Endothelial cell of umbilical vein (primary cell): ENCODE measurements at regions of chr9 and their contacts with region 1.

Region 1: DNA sequence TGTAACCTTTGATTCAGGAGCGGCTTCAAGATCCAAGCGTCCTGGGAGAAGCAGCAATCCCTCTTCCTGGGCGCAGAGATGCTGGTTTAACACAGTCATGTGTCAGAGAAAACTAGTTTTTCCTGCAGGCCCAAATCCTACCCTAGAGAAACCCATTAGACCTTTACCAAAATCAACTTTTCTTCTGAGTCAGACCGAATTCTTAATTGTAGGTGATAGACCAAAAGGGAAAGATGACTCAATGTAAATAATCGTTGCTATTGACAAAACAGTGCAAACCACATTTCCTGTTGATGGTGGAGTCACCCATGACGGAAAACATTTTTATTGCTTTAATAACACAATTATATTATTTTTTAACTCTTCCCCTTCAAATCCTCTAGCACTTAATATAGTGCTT is 40.1 kb downstream of the SLC1A1 start:
- DNase-seq: peak; percentile 80
- H3K4me3 ChIP-seq: peak overlapping the region in 1 of 3 experiments; percentile 28
- H3K27ac ChIP-seq: peak overlapping the region; percentile 96
- H3K4me1 ChIP-seq: peaks cover 26% of the 10 kb centered on the region
- H3K27me3 ChIP-seq: no peaks in the 10 kb centered on the region
- CTCF ChIP-seq: no peak
- POLR2A ChIP-seq: peak; percentile 19

Region 2: GRCh38 chr9:4099976-4100735 is 430.2 kb before region 1 on chr9:
- CTCF ChIA-PET with region 1: no interaction called
- POLR2A ChIA-PET with region 1: no interaction called
- dilution Hi-C with region 1: no loop called
- intact Hi-C with region 1: no loop called
- DNase-seq: no peak
- H3K4me3 ChIP-seq: no peak overlapping the region
- H3K27ac ChIP-seq: no peak overlapping the region
- H3K4me1 ChIP-seq: no peaks in the 10 kb centered on the region
- H3K27me3 ChIP-seq: no peaks in the 10 kb centered on the region
- CTCF ChIP-seq: no peak
- POLR2A ChIP-seq: no peak

Region 3: GRCh38 chr9:4541856-4542255 is 11.5 kb after region 1 on chr9:
- CTCF ChIA-PET with region 1: no interaction called
- POLR2A ChIA-PET with region 1: no interaction called
- dilution Hi-C with region 1: no loop called
- intact Hi-C with region 1: loop called (anchors 1 kb)
- DNase-seq: peak; percentile 18
- H3K4me3 ChIP-seq: no peak overlapping the region
- H3K27ac ChIP-seq: peak overlapping the region; percentile 62
- H3K4me1 ChIP-seq: peaks cover 27% of the 10 kb centered on the region
- H3K27me3 ChIP-seq: no peaks in the 10 kb centered on the region
- CTCF ChIP-seq: no peak
- POLR2A ChIP-seq: no peak

Region 4: DNA sequence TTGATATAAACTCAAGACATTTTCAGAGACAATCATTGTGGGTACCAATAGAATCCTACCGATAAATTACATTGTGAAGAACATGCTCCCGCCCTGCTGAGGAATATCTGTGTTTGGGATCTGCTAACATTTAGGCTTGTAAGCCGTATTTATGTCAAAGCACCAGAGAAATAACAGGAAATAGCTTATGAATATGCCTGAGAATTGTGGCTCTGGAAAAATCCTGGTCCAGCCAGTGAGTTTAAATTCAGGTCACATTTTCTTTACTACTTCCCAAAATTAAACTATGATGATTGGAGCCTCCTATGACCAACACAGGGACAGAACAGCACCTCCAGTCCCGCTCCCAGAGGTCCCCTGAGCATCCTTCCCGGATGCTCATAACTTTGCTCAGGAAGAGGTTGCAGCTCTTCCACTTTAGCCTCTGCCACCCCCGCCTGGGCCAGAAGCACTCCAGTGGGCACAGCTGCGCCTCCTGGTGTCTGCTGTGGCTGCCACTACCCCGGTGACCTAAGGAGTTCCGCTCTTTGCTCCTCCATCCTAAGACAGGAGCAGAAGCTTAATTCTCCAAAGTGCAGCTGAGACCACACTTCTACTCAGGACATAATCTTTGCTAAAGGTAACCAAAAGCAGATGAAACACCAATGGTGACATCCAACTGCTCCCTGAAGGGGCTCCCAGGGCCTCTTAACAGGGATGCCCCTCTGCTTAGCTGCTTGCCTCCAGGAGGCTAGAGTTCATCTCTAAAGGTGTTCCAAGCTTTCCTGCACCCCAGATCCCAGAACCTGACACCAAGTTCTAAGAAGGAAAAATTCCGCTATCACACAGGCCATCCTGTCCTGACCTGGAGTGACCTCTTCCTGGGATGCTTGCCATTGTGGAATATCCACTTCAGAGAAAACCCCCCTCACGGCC is 18.7 kb after region 1 on chr9:
- CTCF ChIA-PET with region 1: interaction called, 4 read pairs
- POLR2A ChIA-PET with region 1: no interaction called
- dilution Hi-C with region 1: no loop called
- intact Hi-C with region 1: loop called (anchors 2 kb)
- DNase-seq: peak; percentile 85
- H3K4me3 ChIP-seq: no peak overlapping the region
- H3K27ac ChIP-seq: no peak overlapping the region
- H3K4me1 ChIP-seq: peaks cover 41% of the 10 kb centered on the region
- H3K27me3 ChIP-seq: no peaks in the 10 kb centered on the region
- CTCF ChIP-seq: peak; percentile 44 to 53
- POLR2A ChIP-seq: no peak

Region 5: GRCh38 chr9:4555251-4555650 is 24.9 kb after region 1 on chr9:
- CTCF ChIA-PET with region 1: no interaction called
- POLR2A ChIA-PET with region 1: no interaction called
- dilution Hi-C with region 1: no loop called
- intact Hi-C with region 1: loop called (anchors 1 kb)
- DNase-seq: peak; percentile 91
- H3K4me3 ChIP-seq: no peak overlapping the region
- H3K27ac ChIP-seq: peak overlapping the region; percentile 86
- H3K4me1 ChIP-seq: peaks cover 23% of the 10 kb centered on the region
- H3K27me3 ChIP-seq: no peaks in the 10 kb centered on the region
- CTCF ChIP-seq: no peak
- POLR2A ChIP-seq: no peak

Region 6: GRCh38 chr9:4596165-4596922 is 66.0 kb after region 1 on chr9:
- CTCF ChIA-PET with region 1: no interaction called
- POLR2A ChIA-PET with region 1: no interaction called
- dilution Hi-C with region 1: no loop called
- intact Hi-C with region 1: loop called (anchors 1 kb)
- DNase-seq: peak; percentile 89
- H3K4me3 ChIP-seq: peak overlapping the region in 1 of 3 experiments; percentile 11
- H3K27ac ChIP-seq: peak overlapping the region; percentile 58
- H3K4me1 ChIP-seq: peaks cover 17% of the 10 kb centered on the region
- H3K27me3 ChIP-seq: no peaks in the 10 kb centered on the region
- CTCF ChIP-seq: no peak
- POLR2A ChIP-seq: peak; percentile 19

Region 7: GRCh38 chr9:4691795-4692194 is 161.4 kb after region 1 on chr9:
- CTCF ChIA-PET with region 1: no interaction called
- POLR2A ChIA-PET with region 1: no interaction called
- dilution Hi-C with region 1: no loop called
- intact Hi-C with region 1: no loop called
- DNase-seq: no peak
- H3K4me3 ChIP-seq: no peak overlapping the region
- H3K27ac ChIP-seq: no peak overlapping the region
- H3K4me1 ChIP-seq: no peaks in the 10 kb centered on the region
- H3K27me3 ChIP-seq: no peaks in the 10 kb centered on the region
- CTCF ChIP-seq: no peak
- POLR2A ChIP-seq: no peak